ENCODE measurements at regions of chr12 and their contacts with region 1.

Region 1: DNA sequence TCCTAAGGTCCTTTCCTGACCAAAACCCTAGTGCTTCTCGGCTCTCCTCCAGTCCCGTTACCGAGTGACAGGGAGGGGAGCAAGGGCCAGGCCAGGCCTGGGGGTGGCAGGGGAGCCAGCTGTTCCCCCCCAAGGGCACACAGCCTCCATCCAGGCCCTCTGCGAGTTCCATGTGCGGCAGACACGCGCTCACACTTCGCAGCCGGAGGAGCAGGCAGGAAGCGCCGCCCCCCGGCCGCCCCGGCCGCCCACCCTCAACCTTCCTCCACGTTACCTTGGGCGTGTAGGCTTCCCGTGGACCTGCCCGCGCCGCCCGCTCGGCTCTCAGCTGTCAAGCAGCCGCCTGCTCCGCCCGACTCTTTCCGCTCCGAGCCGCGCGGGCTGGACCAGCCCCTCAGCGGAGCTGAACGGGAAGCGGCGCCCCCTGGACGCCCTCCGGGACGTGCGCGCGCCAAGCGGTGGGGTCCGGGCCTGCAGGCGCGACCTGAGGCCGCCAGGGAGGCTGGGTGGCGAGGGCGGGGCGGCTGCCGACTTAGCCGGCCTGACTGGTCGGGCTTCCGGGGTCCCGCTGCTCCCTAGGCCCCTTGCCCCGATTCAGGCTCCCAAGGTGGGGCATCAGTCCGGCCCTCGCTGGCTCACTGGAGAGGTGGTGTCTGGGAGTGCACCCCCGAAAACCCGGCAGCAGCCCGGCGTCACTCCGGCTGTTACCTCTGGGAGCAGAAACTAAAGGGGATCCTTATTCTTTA is at the start of gene CRACR2A:
- DNase-seq: peak; percentile 94
- ATAC-seq: peak; percentile 85
- H3K4me3 Mint-ChIP-seq: peak within 1 kb of the TSS; percentile 99
- H3K27ac Mint-ChIP-seq: peak within 1 kb of the TSS; percentile 100
- H3K4me1 Mint-ChIP-seq: peaks cover 49% of the 10 kb centered on the region
- H3K27me3 Mint-ChIP-seq: no peaks in the 10 kb centered on the region
- total RNA-seq, gene CRACR2A: 35.3 to 36.9 TPM

Region 2: GRCh38 chr12:3218228-3219171 is 534.4 kb before region 1 on chr12:
- POLR2A ChIA-PET with region 1: no interaction called
- DNase-seq: no peak
- ATAC-seq: no peak
- H3K4me3 Mint-ChIP-seq: no peak overlapping the region
- H3K27ac Mint-ChIP-seq: no peak overlapping the region
- H3K4me1 Mint-ChIP-seq: peaks cover 2% of the 10 kb centered on the region
- H3K27me3 Mint-ChIP-seq: peaks cover 4% of the 10 kb centered on the region

Region 3: GRCh38 chr12:3651585-3652424 is 101.1 kb before region 1 on chr12:
- POLR2A ChIA-PET with region 1: no interaction called
- DNase-seq: no peak
- ATAC-seq: no peak
- H3K4me3 Mint-ChIP-seq: no peak overlapping the region
- H3K27ac Mint-ChIP-seq: no peak overlapping the region
- H3K4me1 Mint-ChIP-seq: peaks cover 10% of the 10 kb centered on the region
- H3K27me3 Mint-ChIP-seq: no peaks in the 10 kb centered on the region

Region 4: DNA sequence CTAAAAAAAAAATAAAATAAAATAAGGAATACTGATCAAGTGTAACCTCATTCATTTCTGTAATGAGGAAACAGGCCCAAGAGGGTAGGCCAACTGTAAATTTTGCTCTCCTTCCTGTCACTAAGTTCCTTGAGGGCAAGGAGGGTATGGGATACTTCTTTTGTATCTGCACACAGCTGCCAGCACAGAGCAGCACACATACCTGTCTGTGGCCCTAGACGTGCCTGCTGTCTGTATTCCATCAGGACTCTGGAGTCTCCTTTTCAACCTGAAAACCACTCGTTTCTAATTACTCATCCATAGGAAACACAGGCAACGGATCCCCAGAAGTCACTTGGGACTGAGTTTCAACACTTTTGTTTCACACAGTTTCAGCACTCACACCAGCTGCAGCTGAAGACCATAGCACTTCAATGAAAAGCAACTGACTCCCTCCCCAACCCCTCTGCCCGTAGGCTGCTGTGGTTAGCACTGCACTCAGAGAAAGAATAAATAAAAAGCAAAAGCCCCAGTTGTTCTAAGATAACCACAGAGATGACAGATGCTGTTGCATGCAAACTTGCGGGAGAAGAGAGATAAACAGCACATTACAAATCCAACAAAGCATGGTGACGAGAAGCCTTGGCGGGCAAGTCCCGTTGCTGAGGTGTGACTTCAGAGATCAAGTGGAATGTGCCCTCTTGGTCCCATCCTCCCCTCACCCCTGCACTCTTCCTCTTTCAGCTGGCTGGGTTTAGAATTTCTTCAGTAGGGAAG is 24.9 kb before region 1 on chr12:
- POLR2A ChIA-PET with region 1: interaction called, 15 read pairs
- DNase-seq: peak; percentile 41
- ATAC-seq: peak; percentile 75
- H3K4me3 Mint-ChIP-seq: peak overlapping the region; percentile 71
- H3K27ac Mint-ChIP-seq: peak overlapping the region; percentile 85
- H3K4me1 Mint-ChIP-seq: peaks cover 28% of the 10 kb centered on the region
- H3K27me3 Mint-ChIP-seq: no peaks in the 10 kb centered on the region